Activated T-helper 1 cell treated with anti-CD3 and anti-CD28 coated beads, Interleukin-12 subunit alpha, Interleukin-12 subunit beta, Interleukin-2, Interleukin-4 antibody, amounts not matched to agents 30 ng/mL and 10 ng/mL and 1 ng/mL, durations not matched to agents 14 hours and 24 hours and 36 hours (primary cell): ENCODE measurements at regions of chr3 and their contacts with region 1.

Region 1: GRCh38 chr3:160981217-160981938 is 123.8 kb downstream of the B3GALNT1 start:
- DNase-seq: no peak
- H3K4me3 Mint-ChIP-seq: no peak overlapping the region
- H3K27ac Mint-ChIP-seq: no peak overlapping the region
- H3K4me1 Mint-ChIP-seq: peaks cover 14% of the 10 kb centered on the region
- H3K27me3 Mint-ChIP-seq: no peaks in the 10 kb centered on the region

Region 2: DNA sequence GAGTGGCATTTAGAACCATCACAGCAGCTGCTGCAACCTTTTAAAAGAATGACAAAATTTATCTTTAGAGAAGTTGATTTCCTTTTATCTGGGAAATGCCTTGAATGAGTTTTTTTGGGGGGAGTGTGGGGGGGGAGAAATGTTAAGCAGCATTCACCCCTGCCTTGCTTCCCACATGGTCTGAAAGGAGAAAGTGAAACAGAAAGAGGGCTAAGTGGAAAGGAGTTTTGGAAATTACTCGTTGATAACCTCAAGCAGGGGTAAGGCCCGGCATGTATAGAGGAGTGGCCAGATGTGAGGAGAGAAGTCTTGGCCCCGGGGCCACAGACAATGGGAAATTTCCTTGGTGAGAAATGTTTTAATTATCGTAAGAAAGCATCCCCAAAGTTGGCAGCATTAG is 100.3 kb after region 1 on chr3:
- intact Hi-C with region 1: loop called (anchors 5 kb)
- DNase-seq: no peak
- H3K4me3 Mint-ChIP-seq: no peak overlapping the region
- H3K27ac Mint-ChIP-seq: no peak overlapping the region
- H3K4me1 Mint-ChIP-seq: peaks cover 43% of the 10 kb centered on the region
- H3K27me3 Mint-ChIP-seq: no peaks in the 10 kb centered on the region